GM10248 (cell line): ENCODE measurements at regions of chr1 and their contacts with region 1.

Region 1: GRCh38 chr1:55712148-55712547 is 497.0 kb upstream of the USP24 start:
- DNase-seq: no peak
- CTCF ChIP-seq: no peak

Region 2: DNA sequence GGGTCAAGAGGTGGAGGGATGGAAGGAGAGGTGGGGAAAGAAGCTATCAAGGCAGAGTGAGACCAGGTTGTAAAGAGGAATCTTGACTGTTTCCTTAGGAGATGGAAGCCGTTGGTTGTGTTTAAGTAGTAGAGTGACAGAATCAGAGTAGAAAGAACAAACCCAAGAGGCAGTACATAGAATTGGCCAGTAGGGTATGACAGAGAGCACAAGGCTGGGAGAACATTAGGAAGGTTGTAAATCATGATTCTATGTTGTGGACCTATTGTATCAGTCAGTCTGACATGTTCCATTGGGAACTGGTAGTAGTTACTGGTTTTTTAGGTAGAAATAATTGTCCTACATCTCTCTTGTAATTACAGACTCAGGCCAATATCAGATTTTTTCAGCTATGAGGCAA is 10.1 kb before region 1 on chr1:
- CTCF ChIA-PET with region 1: interaction called, 20 read pairs
- POLR2A ChIA-PET with region 1: no interaction called
- DNase-seq: peak; percentile 21
- CTCF ChIP-seq: peak; percentile 49